Activated T-helper 1 cell treated with anti-CD3 and anti-CD28 coated beads, Interleukin-12 subunit alpha, Interleukin-12 subunit beta, Interleukin-2, Interleukin-4 antibody, amounts not matched to agents 30 ng/mL and 10 ng/mL and 1 ng/mL, durations not matched to agents 14 hours and 24 hours and 36 hours (primary cell): ENCODE measurements at regions of chr1 and their contacts with region 1.

Region 1: GRCh38 chr1:203795441-203796235 is at the starts of genes ZBED6 and ZC3H11A:
- DNase-seq: peak; percentile 99
- H3K4me3 Mint-ChIP-seq: peak within 1 kb of the TSS; percentile 96
- H3K27ac Mint-ChIP-seq: peak within 1 kb of the TSS; percentile 98
- H3K4me1 Mint-ChIP-seq: peaks cover 42% of the 10 kb centered on the region
- H3K27me3 Mint-ChIP-seq: no peaks in the 10 kb centered on the region
- total RNA-seq, gene ZBED6: 19.8 and 21.3 TPM in 2 replicates
- total RNA-seq, gene ZC3H11A: 85.0 and 85.5 TPM in 2 replicates

Region 2: DNA sequence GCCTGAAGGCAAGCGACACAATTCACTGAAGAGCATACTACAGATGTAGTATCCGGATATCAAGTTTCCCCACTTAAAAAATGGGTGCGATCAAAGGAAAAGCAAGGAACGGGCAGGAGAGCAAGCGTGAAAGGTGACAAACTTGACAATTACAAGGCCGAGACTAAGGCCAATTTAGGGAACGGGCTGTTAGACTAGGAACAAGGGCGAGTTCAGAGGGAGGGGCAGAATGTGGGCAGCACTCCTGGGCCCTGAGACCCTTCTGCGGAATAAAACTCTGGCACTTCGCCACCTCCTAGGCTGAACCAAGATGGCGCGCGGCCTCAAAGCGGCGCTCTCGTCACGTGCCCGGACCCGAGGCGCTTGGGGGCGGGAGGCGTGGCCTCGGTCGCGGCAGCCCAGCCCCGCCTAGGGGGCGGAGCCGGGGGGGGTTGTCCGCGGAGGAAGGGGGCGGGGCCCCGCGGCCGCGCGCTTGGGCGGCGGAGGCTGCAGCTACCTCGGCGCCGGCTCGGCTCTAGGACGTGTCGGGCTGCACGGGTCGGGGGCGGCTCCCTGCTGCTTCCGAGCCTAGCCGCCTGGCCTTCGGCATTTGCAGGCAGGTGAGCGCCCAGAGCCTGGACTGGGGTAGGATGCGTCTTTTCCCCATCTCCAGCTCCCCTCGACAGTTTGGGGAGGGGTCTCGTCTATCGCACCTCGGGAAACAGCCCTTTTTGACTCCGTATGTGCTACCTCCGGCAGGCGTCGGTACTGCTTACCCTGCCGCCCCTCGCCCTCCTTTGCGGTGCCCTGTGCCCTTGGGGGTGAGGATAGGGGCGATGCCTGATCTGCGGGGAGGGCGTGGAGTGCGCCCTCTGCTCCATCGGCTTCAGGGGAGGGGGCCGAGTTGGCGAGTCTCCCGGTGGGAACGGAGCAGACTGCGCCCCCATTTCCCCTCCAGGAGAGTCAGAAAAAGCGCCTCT is 769.3 kb before region 1 on chr1 and contains the start of gene PPFIA4:
- intact Hi-C with region 1: loop called (anchors 10 kb)
- DNase-seq: peak; percentile 87
- H3K4me3 Mint-ChIP-seq: peak within 1 kb of the TSS; percentile 85
- H3K27ac Mint-ChIP-seq: peak within 1 kb of the TSS; percentile 65
- H3K4me1 Mint-ChIP-seq: peaks cover 25% of the 10 kb centered on the region
- H3K27me3 Mint-ChIP-seq: no peaks in the 10 kb centered on the region
- total RNA-seq, gene PPFIA4: 11.5 and 14.9 TPM in 2 replicates

Region 3: DNA sequence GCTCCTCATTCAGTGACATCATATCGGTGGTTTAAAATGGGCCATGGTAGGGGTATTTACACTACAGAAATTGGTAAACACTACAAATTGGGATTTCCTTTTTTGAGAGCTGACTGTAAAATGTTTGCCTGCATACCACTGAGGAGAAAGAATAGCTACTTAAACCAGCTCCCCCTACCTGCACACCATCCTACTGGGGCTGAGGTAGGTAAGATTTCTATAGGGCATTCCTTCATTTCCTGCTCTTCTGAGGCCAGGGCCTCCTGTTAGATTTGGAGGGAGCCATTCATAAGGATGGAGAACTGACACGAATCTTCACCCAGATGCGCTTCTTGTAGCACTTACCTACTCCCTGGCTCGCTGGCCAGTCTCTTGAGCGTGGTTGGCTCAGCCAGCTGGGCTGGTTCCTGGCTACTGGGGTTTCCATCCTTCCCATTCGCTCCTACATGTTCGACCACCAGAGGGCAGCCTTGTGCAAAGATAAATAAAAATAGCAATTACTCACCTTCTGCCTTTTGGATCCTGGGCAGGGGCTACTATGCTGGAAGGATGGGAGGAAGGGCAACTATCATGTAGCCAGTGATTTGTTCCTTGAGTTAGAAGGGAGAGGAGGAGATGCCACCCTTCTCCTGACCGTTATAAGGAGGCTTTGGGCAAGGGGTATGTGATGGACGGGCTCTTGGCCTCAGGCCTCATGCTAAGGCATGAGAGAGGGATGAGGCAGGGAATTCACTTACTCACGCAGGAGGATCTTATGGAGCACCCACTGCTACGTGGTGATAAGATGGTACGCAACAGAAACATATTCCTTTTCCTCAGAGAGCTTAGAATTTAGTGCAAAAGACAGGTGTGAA is 291.0 kb before region 1 on chr1:
- intact Hi-C with region 1: loop called (anchors 10 kb)
- DNase-seq: peak; percentile 59
- H3K4me3 Mint-ChIP-seq: no peak overlapping the region
- H3K27ac Mint-ChIP-seq: no peak overlapping the region
- H3K4me1 Mint-ChIP-seq: peaks cover 8% of the 10 kb centered on the region
- H3K27me3 Mint-ChIP-seq: peaks cover 9% of the 10 kb centered on the region

Region 4: DNA sequence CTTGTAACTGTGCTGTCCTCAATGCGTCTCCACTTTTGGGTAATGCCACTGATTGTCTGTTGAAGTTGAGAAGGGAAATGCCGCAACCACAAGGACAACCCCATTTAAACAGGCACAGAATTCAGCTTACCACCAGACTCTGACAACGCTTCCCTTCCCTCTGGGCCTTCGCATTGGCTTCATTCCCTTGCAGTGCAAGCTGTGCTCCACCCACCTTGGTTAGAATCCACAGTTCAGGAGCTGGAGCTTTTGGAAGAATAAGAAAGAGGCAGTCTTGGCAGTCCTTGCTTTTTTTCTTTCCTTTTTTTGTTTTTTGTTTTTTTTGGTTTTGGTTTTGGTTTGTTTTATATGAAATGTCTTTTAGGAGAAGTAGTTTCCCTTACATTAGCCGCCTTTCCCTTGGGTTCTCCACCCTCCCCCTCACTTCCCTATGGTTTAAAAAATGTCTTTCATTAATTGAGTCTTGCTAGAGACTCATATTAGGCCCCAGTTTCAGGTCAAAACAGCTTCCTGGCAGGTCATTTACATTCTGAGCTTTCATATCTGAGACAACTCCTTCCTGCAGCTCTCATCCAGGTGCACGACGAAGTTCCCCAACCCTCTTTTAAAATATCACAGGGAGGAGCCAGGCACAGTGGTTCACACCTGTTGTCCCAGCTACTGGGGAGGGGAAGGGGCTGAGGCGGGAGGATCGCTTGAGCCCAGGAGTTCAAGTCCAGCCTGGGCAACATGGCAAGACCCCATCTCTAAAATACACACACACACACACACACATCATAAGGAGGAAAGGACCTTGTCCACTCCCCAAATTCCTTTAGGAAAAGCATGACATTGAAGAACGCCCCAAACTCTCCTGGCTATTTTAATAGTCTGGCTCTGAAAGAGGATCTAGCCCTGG is 51.3 kb before region 1 on chr1:
- intact Hi-C with region 1: loop called (anchors 10 kb)
- DNase-seq: peak; percentile 32
- H3K4me3 Mint-ChIP-seq: peak overlapping the region; percentile 32
- H3K27ac Mint-ChIP-seq: peak overlapping the region; percentile 92
- H3K4me1 Mint-ChIP-seq: peaks cover 25% of the 10 kb centered on the region
- H3K27me3 Mint-ChIP-seq: no peaks in the 10 kb centered on the region

Region 5: GRCh38 chr1:204411451-204412204 is 616.0 kb after region 1 on chr1 and contains the start of gene PPP1R15B:
- intact Hi-C with region 1: loop called (anchors 1 kb)
- DNase-seq: peak; percentile 98
- H3K4me3 Mint-ChIP-seq: peak within 1 kb of the TSS; percentile 99
- H3K27ac Mint-ChIP-seq: peak within 1 kb of the TSS; percentile 99
- H3K4me1 Mint-ChIP-seq: peaks cover 12% of the 10 kb centered on the region
- H3K27me3 Mint-ChIP-seq: no peaks in the 10 kb centered on the region
- total RNA-seq, gene PPP1R15B: 75.8 and 76.2 TPM in 2 replicates